ENCODE measurements at regions of chr19 and their contacts with region 1.

Region 1: DNA sequence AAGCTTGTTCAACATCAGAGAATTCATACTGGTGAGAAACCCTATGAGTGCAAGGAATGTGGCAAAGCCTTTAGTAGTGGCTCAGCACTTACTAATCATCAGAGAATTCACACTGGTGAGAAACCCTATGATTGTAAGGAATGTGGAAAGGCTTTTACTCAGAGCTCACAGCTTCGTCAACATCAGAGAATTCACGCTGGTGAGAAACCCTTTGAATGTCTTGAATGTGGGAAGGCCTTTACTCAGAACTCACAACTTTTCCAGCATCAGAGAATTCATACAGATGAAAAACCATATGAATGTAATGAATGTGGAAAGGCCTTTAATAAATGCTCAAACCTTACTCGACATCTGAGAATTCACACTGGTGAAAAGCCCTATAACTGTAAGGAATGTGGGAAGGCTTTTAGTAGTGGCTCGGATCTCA is 25.2 kb downstream of the ZNF383 start:
- DNase-seq: no peak
- H3K4me3 ChIP-seq: no peak overlapping the region
- H3K27ac ChIP-seq: no peak overlapping the region
- H3K4me1 ChIP-seq: no peaks in the 10 kb centered on the region
- H3K27me3 ChIP-seq: no peaks in the 10 kb centered on the region
- CTCF ChIP-seq: no peak

Region 2: DNA sequence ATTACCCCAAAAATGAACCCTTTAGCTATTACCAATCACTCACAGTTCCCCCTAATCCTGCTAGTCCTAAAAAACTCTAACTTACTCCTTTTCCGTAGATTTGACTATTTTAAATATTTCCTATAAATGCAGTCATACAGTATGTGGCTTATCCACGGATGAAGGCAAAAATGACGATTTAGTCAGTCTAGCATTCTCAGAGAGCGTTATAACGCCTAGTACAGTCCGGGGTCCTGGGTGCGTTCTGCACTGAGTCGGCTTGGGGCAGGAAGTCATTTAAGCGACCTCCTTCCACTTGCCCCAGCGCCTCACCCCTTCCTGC is 25.7 kb before region 1 on chr19:
- CTCF ChIA-PET with region 1: no interaction called
- POLR2A ChIA-PET with region 1: no interaction called
- intact Hi-C with region 1: no loop called
- DNase-seq: no peak
- H3K4me3 ChIP-seq: peak overlapping the region; percentile 78
- H3K27ac ChIP-seq: peak overlapping the region; percentile 90
- H3K4me1 ChIP-seq: no peaks in the 10 kb centered on the region
- H3K27me3 ChIP-seq: no peaks in the 10 kb centered on the region
- CTCF ChIP-seq: no peak

Region 3: DNA sequence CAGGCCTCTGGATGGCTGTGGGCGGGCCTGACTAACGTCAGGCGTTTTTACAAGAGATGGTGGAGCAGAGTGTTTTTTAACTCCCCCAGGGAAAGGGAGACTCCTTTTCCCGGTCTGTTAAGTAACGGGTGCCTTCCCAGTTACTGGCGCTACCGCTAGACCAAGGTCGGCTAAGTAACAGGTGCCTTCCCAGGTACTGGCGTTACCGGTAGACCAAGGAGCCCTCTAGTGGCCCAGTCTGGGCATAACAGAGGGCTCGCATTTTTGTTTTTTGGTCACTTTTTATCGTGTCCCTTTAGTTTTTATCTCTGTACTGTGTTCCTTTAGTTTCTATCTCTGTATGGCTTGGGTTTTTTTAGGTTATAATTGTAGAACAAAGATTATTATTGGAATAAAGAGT is 15.2 kb before region 1 on chr19:
- CTCF ChIA-PET with region 1: no interaction called
- POLR2A ChIA-PET with region 1: interaction called, 15 read pairs
- intact Hi-C with region 1: no loop called
- DNase-seq: peak; percentile 23
- H3K4me3 ChIP-seq: no peak overlapping the region
- H3K27ac ChIP-seq: no peak overlapping the region
- H3K4me1 ChIP-seq: no peaks in the 10 kb centered on the region
- H3K27me3 ChIP-seq: no peaks in the 10 kb centered on the region
- CTCF ChIP-seq: peak; percentile 66

Measured in A673 (cell line).